Activated CD4-positive, alpha-beta T cell treated with anti-CD3 and anti-CD28 coated beads for 36 hours (primary cell): ENCODE measurements at regions of chr11 and their contacts with region 1.

Region 1: GRCh38 chr11:65524741-65525545 is at the start of gene SCYL1:
- DNase-seq: peak; percentile 91
- ATAC-seq: peak; percentile 85
- H3K4me3 Mint-ChIP-seq: peak within 1 kb of the TSS; percentile 86
- H3K27ac Mint-ChIP-seq: peak within 1 kb of the TSS; percentile 93
- H3K4me1 Mint-ChIP-seq: peaks cover 51% of the 10 kb centered on the region
- H3K27me3 Mint-ChIP-seq: no peaks in the 10 kb centered on the region
- total RNA-seq, gene SCYL1: 66.5 to 78.8 TPM

Region 2: DNA sequence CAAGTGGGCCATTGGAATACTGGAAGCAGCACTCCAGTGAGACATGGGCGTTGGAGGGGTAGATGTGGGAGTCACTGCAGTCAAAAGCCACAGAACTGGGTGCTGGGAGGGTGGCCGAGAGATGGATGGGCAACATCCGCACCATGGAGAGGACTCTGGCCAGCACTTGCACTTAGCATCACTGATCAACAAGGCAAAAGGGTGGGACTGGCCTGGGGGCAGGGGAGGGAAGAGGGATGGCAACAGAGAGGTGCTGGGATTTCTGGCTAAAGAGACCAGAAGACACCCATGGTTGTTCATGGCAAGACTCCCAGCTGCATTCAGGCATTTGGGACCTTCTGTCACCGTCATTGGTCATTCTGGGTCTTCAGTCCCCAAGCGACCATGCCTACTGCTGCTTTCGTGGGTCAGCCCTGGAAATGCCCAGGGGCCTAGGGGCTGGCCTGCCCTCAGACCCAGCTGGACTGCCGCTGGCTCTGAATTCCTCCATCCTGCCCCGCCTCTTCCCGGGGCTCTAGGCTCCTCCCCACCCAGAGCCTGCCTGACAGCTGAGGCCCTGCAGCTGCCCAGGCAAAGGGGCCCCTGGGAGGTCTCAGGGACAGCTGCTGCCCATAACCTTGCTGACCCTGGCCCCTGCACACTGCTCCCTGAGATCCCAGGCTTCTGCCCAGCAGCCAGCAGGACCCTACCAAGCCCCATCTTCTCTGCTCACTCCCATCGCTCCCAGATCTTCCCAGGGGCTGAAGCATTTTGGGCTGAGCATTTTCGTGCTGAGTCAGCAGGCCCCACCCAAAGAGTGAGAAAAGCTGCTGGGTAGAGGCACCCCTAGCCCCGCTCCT is 223.2 kb before region 1 on chr11:
- CTCF ChIA-PET with region 1: no interaction called
- POLR2A ChIA-PET with region 1: no interaction called
- intact Hi-C with region 1: no loop called
- DNase-seq: no peak
- ATAC-seq: no peak
- H3K4me3 Mint-ChIP-seq: no peak overlapping the region
- H3K27ac Mint-ChIP-seq: no peak overlapping the region
- H3K4me1 Mint-ChIP-seq: no peaks in the 10 kb centered on the region
- H3K27me3 Mint-ChIP-seq: no peaks in the 10 kb centered on the region

Region 3: GRCh38 chr11:65354265-65355012 is 170.5 kb before region 1 on chr11 and contains the start of gene TIGD3:
- CTCF ChIA-PET with region 1: no interaction called
- POLR2A ChIA-PET with region 1: no interaction called
- intact Hi-C with region 1: loop called in 1 of 2 experiments (anchors 1 kb)
- DNase-seq: peak; percentile 98
- ATAC-seq: peak; percentile 99
- H3K4me3 Mint-ChIP-seq: peak within 1 kb of the TSS; percentile 73
- H3K27ac Mint-ChIP-seq: peak within 1 kb of the TSS; percentile 42
- H3K4me1 Mint-ChIP-seq: peaks cover 13% of the 10 kb centered on the region
- H3K27me3 Mint-ChIP-seq: no peaks in the 10 kb centered on the region
- total RNA-seq, gene TIGD3: 0.58 to 1.1 TPM

Region 4: DNA sequence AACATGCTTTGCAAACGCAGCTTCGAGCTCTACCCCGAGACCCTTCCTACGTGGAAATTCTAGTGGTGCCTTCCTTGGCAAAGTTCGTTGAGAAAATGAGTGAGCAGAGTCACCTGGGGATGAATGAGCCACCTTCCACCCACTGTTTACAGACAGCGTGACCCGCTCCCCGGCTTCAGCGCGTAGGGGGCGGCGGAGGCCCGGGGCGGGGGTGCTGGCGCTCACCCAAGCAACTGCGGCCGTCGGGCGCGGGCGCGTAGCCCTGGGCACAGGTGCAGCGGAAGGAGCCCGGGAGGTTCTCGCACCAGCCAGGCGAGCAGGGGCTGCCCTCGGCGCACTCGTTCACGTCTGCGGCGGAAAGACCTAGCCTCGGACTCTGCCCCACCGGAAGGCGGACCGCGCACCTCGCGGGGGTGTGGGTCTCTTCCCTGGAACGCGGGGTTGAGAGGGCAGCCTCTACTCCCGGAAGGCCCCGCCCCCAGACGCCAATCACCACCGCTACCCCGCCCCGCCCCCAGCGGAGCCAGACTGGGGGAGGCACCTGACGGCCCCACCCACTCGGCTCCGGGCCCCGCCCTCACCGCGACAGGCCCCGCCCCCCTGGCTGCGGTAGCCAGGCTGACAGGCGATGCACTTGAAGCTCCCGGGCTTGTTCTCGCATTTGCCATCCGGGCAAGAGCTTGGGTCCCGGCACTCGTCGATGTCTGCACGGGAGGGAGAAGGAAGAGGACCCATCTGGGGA is 21.4 kb after region 1 on chr11:
- CTCF ChIA-PET with region 1: interaction called, 26 read pairs
- POLR2A ChIA-PET with region 1: no interaction called
- intact Hi-C with region 1: loop called in 1 of 2 experiments (anchors 1 kb)
- DNase-seq: peak; percentile 99
- ATAC-seq: peak; percentile 85
- H3K4me3 Mint-ChIP-seq: peak overlapping the region; percentile 72
- H3K27ac Mint-ChIP-seq: peak overlapping the region; percentile 87
- H3K4me1 Mint-ChIP-seq: peaks cover 46% of the 10 kb centered on the region
- H3K27me3 Mint-ChIP-seq: no peaks in the 10 kb centered on the region